ENCODE measurements at regions of chr7 and their contacts with region 1.

Region 1: DNA sequence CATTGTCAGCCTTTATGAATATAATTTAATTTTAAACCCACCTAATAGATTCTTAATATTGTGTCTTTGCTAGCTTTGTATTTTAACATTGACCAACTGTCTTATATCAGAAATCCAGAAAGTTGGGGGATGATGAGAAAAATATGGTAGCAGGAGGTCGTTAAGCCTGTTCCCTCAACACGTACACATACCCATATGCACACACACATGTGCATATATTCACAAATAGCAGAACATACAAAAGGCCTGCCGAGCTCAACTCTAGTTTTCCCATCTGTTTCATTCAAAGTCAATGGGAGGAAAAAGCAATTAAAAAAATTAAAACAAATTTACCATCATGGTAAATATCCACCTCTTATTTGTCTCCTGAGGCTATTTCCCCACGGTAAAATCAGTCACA is 25.9 kb upstream of the PTPRZ1 start:
- DNase-seq: no peak
- ATAC-seq: no peak
- H3K4me3 ChIP-seq: no peak overlapping the region
- H3K27ac ChIP-seq: no peak overlapping the region
- H3K4me1 ChIP-seq: no peaks in the 10 kb centered on the region
- H3K27me3 ChIP-seq: no peaks in the 10 kb centered on the region
- CTCF ChIP-seq: no peak
- POLR2A ChIP-seq: no peak

Region 2: DNA sequence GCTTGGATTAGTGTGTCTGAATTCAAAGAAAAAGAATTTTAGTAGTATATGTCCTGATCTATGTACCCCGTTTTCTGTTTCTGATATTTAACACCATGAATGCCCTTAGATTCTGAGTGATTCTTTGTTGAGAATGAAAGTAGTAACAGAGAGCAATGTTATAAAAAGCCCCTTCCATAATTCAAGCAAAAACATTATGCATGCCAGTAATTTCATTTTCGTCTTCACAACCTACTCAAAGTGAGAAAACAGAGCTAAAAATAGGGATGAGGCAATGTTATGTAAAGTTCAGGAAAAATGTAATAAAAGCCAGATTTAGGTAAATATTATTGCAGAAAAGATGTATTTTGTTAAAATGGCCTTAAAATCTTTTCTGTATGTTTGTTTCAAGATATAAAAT is 54.0 kb after region 1 on chr7:
- intact Hi-C with region 1: loop called in 1 of 10 experiments (anchors 10 kb)
- DNase-seq: no peak
- ATAC-seq: no peak
- H3K4me3 ChIP-seq: no peak overlapping the region
- H3K27ac ChIP-seq: no peak overlapping the region
- H3K4me1 ChIP-seq: no peaks in the 10 kb centered on the region
- H3K27me3 ChIP-seq: no peaks in the 10 kb centered on the region
- CTCF ChIP-seq: no peak
- POLR2A ChIP-seq: no peak